ENCODE measurements at regions of chr1 and their contacts with region 1.

Region 1: DNA sequence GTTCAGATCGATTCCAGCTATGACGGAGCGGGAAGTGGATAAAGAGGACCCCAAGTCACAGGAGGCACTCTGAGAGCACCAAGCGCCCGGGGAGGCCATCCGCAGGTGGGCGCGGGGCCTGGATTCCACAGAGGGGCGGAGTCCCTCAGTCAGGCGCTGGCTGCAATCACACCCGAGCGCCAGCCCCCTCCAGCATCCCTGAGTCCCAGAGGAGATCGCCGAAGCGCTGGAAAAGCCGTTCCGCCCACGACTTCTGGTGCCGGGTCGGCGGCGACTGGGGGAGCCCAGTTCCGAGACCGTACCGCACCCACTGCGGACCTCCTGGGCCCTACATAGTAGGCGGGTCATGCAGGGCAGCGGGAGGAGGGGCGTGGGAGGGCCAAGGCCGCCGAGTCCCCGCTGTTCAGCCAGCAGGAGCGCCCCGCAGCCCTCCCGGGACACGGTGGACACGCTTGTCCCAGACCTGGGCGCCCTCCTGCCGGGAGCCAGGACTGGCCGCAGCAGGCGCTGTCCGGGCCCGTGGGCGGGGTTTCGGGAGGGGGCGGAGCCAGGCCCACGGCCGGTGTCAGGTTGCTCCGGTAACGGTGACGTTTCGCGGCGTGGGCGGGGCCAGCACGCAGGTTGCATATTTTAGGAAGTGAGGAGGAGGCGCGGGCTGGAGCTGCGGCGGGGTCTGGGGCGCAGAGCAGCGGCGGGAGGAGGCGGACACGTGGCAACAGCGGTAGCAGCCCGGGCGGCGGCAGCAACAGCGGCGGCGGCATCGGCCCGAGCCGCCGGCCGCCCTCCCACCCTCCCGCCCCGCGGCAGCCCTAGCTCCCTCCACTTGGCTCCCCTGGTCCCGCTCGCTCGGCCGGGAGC is at the start of gene ATP1A1:
- DNase-seq: peak; percentile 97 to 99
- H3K4me3 ChIP-seq: peak within 1 kb of the TSS; percentile 92 to 98
- H3K27ac ChIP-seq: peak within 1 kb of the TSS; percentile 97
- H3K4me1 ChIP-seq: peaks cover 42% of the 10 kb centered on the region
- H3K27me3 ChIP-seq: no peaks in the 10 kb centered on the region
- CTCF ChIP-seq: no peak
- POLR2A ChIP-seq: peak; percentile 91 to 95
- total RNA-seq, gene ATP1A1: 358 TPM

Region 2: DNA sequence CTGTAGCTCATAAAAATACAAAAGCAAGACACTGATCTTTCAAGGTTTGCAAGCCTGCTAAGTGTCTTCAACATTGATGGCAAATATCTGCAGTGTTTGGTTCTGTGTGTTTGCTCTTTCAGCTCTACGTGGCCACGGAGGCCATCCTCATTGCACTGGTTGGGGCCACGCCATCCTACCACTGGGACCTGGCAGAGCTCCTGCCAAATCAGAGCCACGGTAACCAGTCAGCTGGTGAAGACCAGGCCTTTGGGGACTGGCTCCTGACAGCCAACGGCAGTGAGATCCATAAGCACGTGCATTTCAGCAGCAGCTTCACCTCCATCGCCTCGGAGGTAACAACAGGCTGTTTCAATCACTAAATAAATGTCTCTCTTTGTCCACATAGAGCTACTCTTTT is 380.9 kb before region 1 on chr1:
- intact Hi-C with region 1: no loop called
- DNase-seq: no peak
- H3K4me3 ChIP-seq: no peak overlapping the region
- H3K27ac ChIP-seq: no peak overlapping the region
- H3K4me1 ChIP-seq: no peaks in the 10 kb centered on the region
- H3K27me3 ChIP-seq: no peaks in the 10 kb centered on the region
- CTCF ChIP-seq: no peak
- POLR2A ChIP-seq: no peak

Region 3: GRCh38 chr1:116168277-116169097 is 204.3 kb before region 1 on chr1:
- intact Hi-C with region 1: loop called (anchors 10 kb)
- DNase-seq: peak in 1 of 2 donors; percentile 74
- H3K4me3 ChIP-seq: peak overlapping the region; percentile 62 to 64
- H3K27ac ChIP-seq: peak overlapping the region; percentile 72
- H3K4me1 ChIP-seq: peaks cover 34% of the 10 kb centered on the region
- H3K27me3 ChIP-seq: no peaks in the 10 kb centered on the region
- CTCF ChIP-seq: peak; percentile 69 to 85 (median 82)
- POLR2A ChIP-seq: no peak